ENCODE measurements at regions of chr13 and their contacts with region 1.

Region 1: GRCh38 chr13:29850224-29850898 is at the start of gene UBL3:
- DNase-seq: peak; percentile 84
- ATAC-seq: peak; percentile 90
- H3K4me3 Mint-ChIP-seq: peak within 1 kb of the TSS; percentile 96
- H3K27ac Mint-ChIP-seq: peak within 1 kb of the TSS; percentile 99
- H3K4me1 Mint-ChIP-seq: peaks cover 33% of the 10 kb centered on the region
- H3K27me3 Mint-ChIP-seq: no peaks in the 10 kb centered on the region
- CTCF ChIP-seq: no peak
- total RNA-seq, gene UBL3: 17.9 and 18.6 TPM in 2 replicates

Region 2: GRCh38 chr13:29595380-29596063 is 254.8 kb before region 1 on chr13 and contains the start of gene SLC7A1:
- CTCF ChIA-PET with region 1: no interaction called
- POLR2A ChIA-PET with region 1: interaction called, 4 read pairs
- intact Hi-C with region 1: loop called (anchors 1 kb)
- DNase-seq: peak; percentile 82
- ATAC-seq: peak; percentile 87
- H3K4me3 Mint-ChIP-seq: peak within 1 kb of the TSS; percentile 91
- H3K27ac Mint-ChIP-seq: peak within 1 kb of the TSS; percentile 88
- H3K4me1 Mint-ChIP-seq: peaks cover 33% of the 10 kb centered on the region
- H3K27me3 Mint-ChIP-seq: peaks cover 1% of the 10 kb centered on the region
- CTCF ChIP-seq: no peak
- total RNA-seq, gene SLC7A1: 83.5 and 85.0 TPM in 2 replicates

Region 3: GRCh38 chr13:29817604-29818378 is 32.6 kb before region 1 on chr13:
- CTCF ChIA-PET with region 1: interaction called, 10 read pairs
- POLR2A ChIA-PET with region 1: interaction called, 34 read pairs
- intact Hi-C with region 1: loop called (anchors 1 kb)
- DNase-seq: no peak
- ATAC-seq: peak; percentile 98
- H3K4me3 Mint-ChIP-seq: peak overlapping the region; percentile 68
- H3K27ac Mint-ChIP-seq: peak overlapping the region; percentile 73
- H3K4me1 Mint-ChIP-seq: peaks cover 66% of the 10 kb centered on the region
- H3K27me3 Mint-ChIP-seq: no peaks in the 10 kb centered on the region
- CTCF ChIP-seq: no peak

Region 4: DNA sequence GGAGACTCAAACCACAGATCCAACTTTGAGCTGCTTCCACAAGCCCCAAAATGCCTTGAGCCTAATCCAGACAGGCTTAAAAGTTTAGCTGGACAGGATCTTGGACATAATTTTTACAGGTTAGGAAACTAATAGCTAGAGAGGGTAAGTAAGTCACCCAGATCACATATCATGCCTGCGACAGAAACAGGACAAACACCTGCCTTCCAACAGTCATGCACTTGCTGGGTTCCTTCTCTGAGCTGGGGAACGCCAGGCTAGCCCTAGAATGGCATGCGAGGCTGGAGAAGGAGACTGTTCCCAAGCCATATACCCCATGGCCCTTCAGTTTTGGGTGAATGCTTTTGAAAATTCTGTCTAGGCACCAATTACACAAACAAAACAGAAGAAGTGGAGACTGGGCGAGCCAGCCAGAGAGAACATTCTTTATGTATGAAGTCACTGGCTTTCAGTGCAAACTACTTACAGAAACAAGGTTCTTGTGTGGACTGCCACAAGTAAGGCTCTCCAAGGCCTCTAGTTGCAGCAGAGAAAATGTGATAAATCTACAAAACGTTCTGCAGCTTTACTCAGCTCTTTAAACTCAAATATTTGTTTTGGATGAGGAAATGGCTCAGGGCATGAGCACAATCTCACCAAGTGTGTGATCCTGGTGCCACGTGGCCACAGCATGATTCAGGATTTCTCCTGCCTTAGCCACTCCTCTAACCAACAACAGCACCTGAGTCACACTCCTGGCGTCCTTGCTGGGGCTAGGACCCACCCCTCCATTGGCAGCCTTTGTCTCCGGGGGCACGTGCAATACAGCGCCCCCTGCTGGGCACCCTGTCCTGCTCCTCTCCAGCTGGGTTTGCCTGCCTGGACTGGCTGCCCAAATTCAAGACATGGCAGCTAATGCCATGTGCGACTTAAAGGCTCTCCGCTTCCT is 73.5 kb after region 1 on chr13:
- CTCF ChIA-PET with region 1: interaction called, 5 read pairs
- POLR2A ChIA-PET with region 1: no interaction called
- intact Hi-C with region 1: loop called (anchors 1 kb)
- DNase-seq: peak; percentile 40
- ATAC-seq: peak; percentile 65
- H3K4me3 Mint-ChIP-seq: no peak overlapping the region
- H3K27ac Mint-ChIP-seq: no peak overlapping the region
- H3K4me1 Mint-ChIP-seq: no peaks in the 10 kb centered on the region
- H3K27me3 Mint-ChIP-seq: peaks cover 5% of the 10 kb centered on the region
- CTCF ChIP-seq: peak; percentile 85

Region 5: DNA sequence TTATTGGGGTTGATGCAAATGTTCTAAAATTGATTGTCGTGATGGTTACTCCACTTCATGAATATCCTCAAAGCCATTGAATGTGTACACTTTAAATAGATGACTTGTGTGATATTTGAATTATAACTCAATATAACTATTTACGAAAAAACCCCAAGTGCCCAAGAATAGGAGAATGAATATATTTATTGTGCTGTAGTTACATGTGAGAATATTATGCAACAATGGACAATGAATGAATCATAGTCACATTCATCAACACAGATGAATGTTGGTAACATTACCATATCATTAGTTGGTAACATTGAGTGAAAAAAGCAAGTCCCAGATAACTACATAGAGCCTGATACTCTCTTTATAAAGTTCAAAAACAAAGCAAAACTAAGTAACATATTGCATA is 127.8 kb after region 1 on chr13:
- CTCF ChIA-PET with region 1: no interaction called
- POLR2A ChIA-PET with region 1: no interaction called
- intact Hi-C with region 1: no loop called
- DNase-seq: no peak
- ATAC-seq: no peak
- H3K4me3 Mint-ChIP-seq: no peak overlapping the region
- H3K27ac Mint-ChIP-seq: no peak overlapping the region
- H3K4me1 Mint-ChIP-seq: no peaks in the 10 kb centered on the region
- H3K27me3 Mint-ChIP-seq: no peaks in the 10 kb centered on the region
- CTCF ChIP-seq: no peak

Region 6: GRCh38 chr13:31161828-31162590 is 1311.6 kb after region 1 on chr13 and contains the start of gene HSPH1:
- CTCF ChIA-PET with region 1: no interaction called
- POLR2A ChIA-PET with region 1: no interaction called
- intact Hi-C with region 1: loop called (anchors 1 kb)
- DNase-seq: peak; percentile 99
- ATAC-seq: peak; percentile 85
- H3K4me3 Mint-ChIP-seq: peak within 1 kb of the TSS; percentile 97
- H3K27ac Mint-ChIP-seq: peak within 1 kb of the TSS; percentile 95
- H3K4me1 Mint-ChIP-seq: peaks cover 36% of the 10 kb centered on the region
- H3K27me3 Mint-ChIP-seq: no peaks in the 10 kb centered on the region
- CTCF ChIP-seq: no peak
- total RNA-seq, gene HSPH1: 107 and 112 TPM in 2 replicates

Measured in activated B cell treated with CpG ODN at 0.5 μM for 24 hours (primary cell).